Heart right ventricle (tissue), 16 donors: ENCODE measurements at regions of chr11 and their contacts with region 1.

Region 1: DNA sequence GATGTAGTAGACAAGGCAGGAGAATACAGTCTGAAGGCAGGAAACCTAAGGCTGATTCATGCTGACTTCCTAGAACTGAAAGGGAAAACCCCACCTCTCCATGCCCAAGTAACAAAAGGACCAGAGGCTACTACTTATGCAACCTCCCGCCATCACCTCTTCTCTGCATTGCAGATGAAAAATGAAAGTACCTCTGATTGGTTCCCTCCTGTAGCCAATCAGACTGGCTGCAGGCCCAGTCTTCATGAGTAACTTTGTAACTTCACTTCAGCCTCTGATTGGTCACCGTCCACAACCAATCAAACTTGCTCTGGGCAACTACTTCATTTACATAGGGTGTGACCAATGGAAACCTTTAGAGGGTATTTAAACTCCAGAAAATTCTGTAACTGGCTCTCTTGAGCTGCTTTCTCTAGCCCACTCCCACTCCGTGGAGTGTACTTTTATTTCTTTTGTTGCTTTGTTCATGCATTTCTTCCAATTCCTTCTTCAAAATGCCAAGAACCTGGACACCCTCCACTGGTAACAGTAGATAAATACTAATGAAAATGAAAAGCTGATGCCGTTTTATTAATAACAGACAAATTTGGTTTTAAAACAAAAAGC is 5.2 kb upstream of the MAP6 start:
- DNase-seq: no peak
- ATAC-seq: no peak
- H3K4me3 ChIP-seq: no peak overlapping the region
- H3K27ac ChIP-seq: no peak overlapping the region
- H3K4me1 ChIP-seq: peaks cover 0 to 4% (median 0%) of the 10 kb centered on the region in 9 donors
- H3K27me3 ChIP-seq: peaks cover 0 to 36% (median 13%) of the 10 kb centered on the region in 7 donors
- CTCF ChIP-seq: no peak

Region 2: GRCh38 chr11:75635066-75635862 is 38.8 kb before region 1 on chr11:
- intact Hi-C with region 1: loop called in 1 of 10 experiments (anchors 1 kb)
- DNase-seq: peak; percentile 14 to 29
- ATAC-seq: peak in 6 of 8 donors; percentile 45 to 64 (median 59)
- H3K4me3 ChIP-seq: peak overlapping the region in 1 of 10 donors; percentile 4
- H3K27ac ChIP-seq: peak overlapping the region in 8 of 10 donors; percentile 16 to 74 (median 60)
- H3K4me1 ChIP-seq: peaks cover 0 to 31% (median 11%) of the 10 kb centered on the region in 9 donors
- H3K27me3 ChIP-seq: no peaks in the 10 kb centered on the region
- CTCF ChIP-seq: no peak